Activated CD4-positive, alpha-beta T cell treated with anti-CD3 and anti-CD28 coated beads, Interleukin-2, amount 10 ng/mL, durations not matched to agents 7 days and 5 days (primary cell): ENCODE measurements at regions of chr5 and their contacts with region 1.

Region 1: GRCh38 chr5:95822542-95823181 is at the start of gene GLRX:
- DNase-seq: peak; percentile 77
- H3K4me3 Mint-ChIP-seq: peak within 1 kb of the TSS; percentile 91
- H3K27ac Mint-ChIP-seq: peak within 1 kb of the TSS; percentile 93
- H3K4me1 Mint-ChIP-seq: peaks cover 69% of the 10 kb centered on the region
- H3K27me3 Mint-ChIP-seq: no peaks in the 10 kb centered on the region
- total RNA-seq, gene GLRX: 60.2 to 61.1 TPM

Region 2: GRCh38 chr5:95808686-95809413 is 13.8 kb before region 1 on chr5:
- CTCF ChIA-PET with region 1: interaction called, 32 read pairs
- POLR2A ChIA-PET with region 1: no interaction called
- DNase-seq: peak; percentile 90
- H3K4me3 Mint-ChIP-seq: peak overlapping the region; percentile 2
- H3K27ac Mint-ChIP-seq: peak overlapping the region; percentile 86
- H3K4me1 Mint-ChIP-seq: peaks cover 63% of the 10 kb centered on the region
- H3K27me3 Mint-ChIP-seq: no peaks in the 10 kb centered on the region

Region 3: DNA sequence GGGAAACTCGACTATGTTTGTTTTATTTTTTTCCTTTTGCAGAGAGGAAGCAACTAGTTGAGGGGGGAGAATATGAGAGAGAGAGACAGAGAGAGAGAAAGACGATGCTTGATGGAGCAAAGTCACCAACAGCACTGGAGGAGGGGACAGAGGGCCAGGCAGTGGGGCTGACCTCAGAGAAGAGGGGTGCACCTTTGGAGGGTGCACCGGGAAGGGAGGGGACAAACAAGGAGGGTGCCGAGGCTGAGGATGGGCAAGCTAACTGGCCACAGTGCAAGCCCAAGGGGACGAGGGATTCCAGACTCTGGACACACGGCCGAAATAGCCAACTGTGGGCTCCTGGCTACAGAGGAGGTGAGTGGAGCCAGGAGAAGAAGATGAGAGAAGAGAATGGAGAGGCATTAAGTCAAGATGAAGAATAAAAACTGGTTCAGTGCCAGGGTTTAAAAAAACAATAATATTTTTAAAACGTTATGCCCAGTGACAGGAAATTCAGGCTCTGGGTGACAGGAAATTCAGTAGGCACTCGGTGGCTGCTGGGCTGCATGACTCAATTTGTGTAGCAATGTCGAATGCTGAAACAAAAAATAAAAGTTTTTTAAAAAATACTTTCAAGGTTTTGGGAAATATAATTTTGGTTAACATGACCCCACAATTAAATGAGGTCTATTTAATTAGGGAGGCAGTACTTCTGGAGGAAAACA is 13.2 kb after region 1 on chr5:
- CTCF ChIA-PET with region 1: interaction called, 18 read pairs
- POLR2A ChIA-PET with region 1: no interaction called
- DNase-seq: peak; percentile 26
- H3K4me3 Mint-ChIP-seq: peak overlapping the region; percentile 79
- H3K27ac Mint-ChIP-seq: peak overlapping the region; percentile 89
- H3K4me1 Mint-ChIP-seq: peaks cover 41% of the 10 kb centered on the region
- H3K27me3 Mint-ChIP-seq: no peaks in the 10 kb centered on the region

Region 4: GRCh38 chr5:96110300-96110699 is 287.6 kb after region 1 on chr5:
- CTCF ChIA-PET with region 1: no interaction called
- POLR2A ChIA-PET with region 1: no interaction called
- DNase-seq: no peak
- H3K4me3 Mint-ChIP-seq: no peak overlapping the region
- H3K27ac Mint-ChIP-seq: no peak overlapping the region
- H3K4me1 Mint-ChIP-seq: peaks cover 17% of the 10 kb centered on the region
- H3K27me3 Mint-ChIP-seq: no peaks in the 10 kb centered on the region